Activated CD8-positive, alpha-beta T cell treated with anti-CD3 and anti-CD28 coated beads for 36 hours (primary cell): ENCODE measurements at regions of chr1 and their contacts with region 1.

Region 1: GRCh38 chr1:167617153-167618147 is 12.6 kb upstream of the RCSD1 start:
- DNase-seq: peak; percentile 35
- ATAC-seq: peak; percentile 68
- H3K4me3 Mint-ChIP-seq: peak overlapping the region; percentile 48
- H3K27ac Mint-ChIP-seq: peak overlapping the region; percentile 86
- H3K4me1 Mint-ChIP-seq: peaks cover 44% of the 10 kb centered on the region
- H3K27me3 Mint-ChIP-seq: no peaks in the 10 kb centered on the region
- CTCF ChIP-seq: no peak

Region 2: GRCh38 chr1:167627865-167628641 is 10.6 kb after region 1 on chr1:
- CTCF ChIA-PET with region 1: interaction called, 5 read pairs
- POLR2A ChIA-PET with region 1: interaction called, 21 read pairs
- intact Hi-C with region 1: no loop called
- DNase-seq: peak; percentile 90
- ATAC-seq: peak; percentile 79
- H3K4me3 Mint-ChIP-seq: peak overlapping the region; percentile 89
- H3K27ac Mint-ChIP-seq: peak overlapping the region; percentile 95
- H3K4me1 Mint-ChIP-seq: peaks cover 41% of the 10 kb centered on the region
- H3K27me3 Mint-ChIP-seq: no peaks in the 10 kb centered on the region
- CTCF ChIP-seq: no peak